B cell (primary cell): ENCODE measurements at regions of chr1 and their contacts with region 1.

Region 1: DNA sequence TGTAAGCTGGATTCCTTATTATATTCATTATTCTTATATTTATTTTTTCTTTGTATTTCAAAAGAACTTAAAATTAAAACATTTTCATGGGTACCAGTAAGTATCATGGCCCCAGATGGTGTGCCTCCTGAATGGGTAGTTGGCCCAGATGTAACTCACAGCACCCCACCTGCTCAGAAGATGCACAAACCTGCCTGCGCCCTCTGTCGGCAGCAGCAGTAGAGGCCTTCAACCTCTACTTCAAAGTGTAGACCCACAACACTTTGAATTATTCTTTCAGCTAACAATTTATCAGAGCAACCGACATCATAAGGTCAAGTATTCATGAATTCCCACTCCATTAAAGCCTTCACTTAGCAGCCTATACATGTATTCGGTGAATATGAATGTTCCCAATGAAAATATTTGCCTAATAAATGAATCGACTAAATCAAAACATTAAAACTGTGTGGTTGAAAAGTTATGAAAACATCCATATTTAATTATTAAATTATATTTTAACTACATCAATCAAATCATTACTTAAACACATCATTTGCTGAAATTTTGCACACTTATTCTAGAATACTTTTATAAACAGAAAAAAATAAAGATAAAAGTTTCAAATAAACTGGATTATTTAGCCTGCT is 25.4 kb downstream of the PIGM start:
- DNase-seq: peak; percentile 83
- ATAC-seq: peak; percentile 84
- H3K4me3 ChIP-seq: no peak overlapping the region
- H3K4me3 Mint-ChIP-seq: no peak overlapping the region
- H3K27ac ChIP-seq: no peak overlapping the region
- H3K27ac Mint-ChIP-seq: no peak overlapping the region
- H3K4me1 ChIP-seq: no peaks in the 10 kb centered on the region
- H3K4me1 Mint-ChIP-seq: no peaks in the 10 kb centered on the region
- H3K27me3 ChIP-seq: peaks cover 0 to 7% (median 0%) of the 10 kb centered on the region in 4 experiments
- H3K27me3 Mint-ChIP-seq: peaks cover 15% of the 10 kb centered on the region
- CTCF ChIP-seq: peak; percentile 91

Region 2: GRCh38 chr1:159214149-159214760 is 792.2 kb before region 1 on chr1:
- CTCF ChIA-PET with region 1: interaction called, 15 read pairs
- POLR2A ChIA-PET with region 1: no interaction called
- intact Hi-C with region 1: no loop called
- DNase-seq: peak; percentile 64
- ATAC-seq: peak; percentile 73
- H3K4me3 ChIP-seq: no peak overlapping the region
- H3K4me3 Mint-ChIP-seq: no peak overlapping the region
- H3K27ac ChIP-seq: no peak overlapping the region
- H3K27ac Mint-ChIP-seq: no peak overlapping the region
- H3K4me1 ChIP-seq: peaks cover 0 to 3% of the 10 kb centered on the region in 2 donors
- H3K4me1 Mint-ChIP-seq: peaks cover 2% of the 10 kb centered on the region
- H3K27me3 ChIP-seq: peaks cover 0 to 25% (median 7%) of the 10 kb centered on the region in 4 experiments
- H3K27me3 Mint-ChIP-seq: peaks cover 54% of the 10 kb centered on the region
- CTCF ChIP-seq: peak; percentile 98

Region 3: GRCh38 chr1:159737238-159737916 is 269.0 kb before region 1 on chr1:
- CTCF ChIA-PET with region 1: no interaction called
- POLR2A ChIA-PET with region 1: no interaction called
- intact Hi-C with region 1: no loop called
- DNase-seq: no peak
- ATAC-seq: no peak
- H3K4me3 ChIP-seq: no peak overlapping the region
- H3K4me3 Mint-ChIP-seq: no peak overlapping the region
- H3K27ac ChIP-seq: no peak overlapping the region
- H3K27ac Mint-ChIP-seq: no peak overlapping the region
- H3K4me1 ChIP-seq: no peaks in the 10 kb centered on the region
- H3K4me1 Mint-ChIP-seq: no peaks in the 10 kb centered on the region
- H3K27me3 ChIP-seq: peaks cover 0 to 2% (median 0%) of the 10 kb centered on the region in 4 experiments
- H3K27me3 Mint-ChIP-seq: peaks cover 22% of the 10 kb centered on the region
- CTCF ChIP-seq: no peak

Region 4: DNA sequence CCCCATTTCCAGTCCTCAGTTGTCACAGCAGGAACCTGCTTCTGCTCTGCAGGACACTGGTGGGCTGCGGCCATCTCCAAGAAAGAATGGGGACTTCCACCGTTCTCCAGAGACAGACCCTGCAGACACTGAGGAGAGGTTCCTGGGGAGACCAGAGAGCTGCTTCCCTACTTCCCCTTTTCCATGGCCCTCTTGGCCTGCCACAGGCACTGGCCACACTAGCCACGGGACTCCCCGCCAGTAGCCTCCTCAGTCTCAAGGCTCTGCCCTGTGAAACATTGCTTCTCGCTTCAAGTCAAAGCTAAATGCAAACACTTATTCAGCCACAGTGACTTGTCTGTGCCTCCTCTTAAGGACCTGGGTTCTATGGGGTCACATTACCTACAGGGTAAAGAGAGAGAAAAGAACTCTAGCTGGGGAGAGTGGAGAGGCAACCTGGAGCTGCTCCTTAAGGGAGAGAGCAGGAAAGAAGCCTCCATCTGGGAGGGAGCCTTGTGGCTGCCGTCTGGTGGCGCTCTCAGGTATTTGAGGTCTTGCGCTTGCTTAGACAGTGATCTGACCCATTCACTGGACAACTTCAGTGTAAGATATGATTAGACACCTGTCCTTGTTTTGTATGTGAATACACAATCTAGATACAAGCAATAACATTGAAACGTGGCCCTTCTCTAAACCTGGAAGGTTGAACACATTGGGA is 185.1 kb before region 1 on chr1:
- CTCF ChIA-PET with region 1: interaction called, 26 read pairs
- POLR2A ChIA-PET with region 1: no interaction called
- intact Hi-C with region 1: no loop called
- DNase-seq: peak; percentile 52
- ATAC-seq: no peak
- H3K4me3 ChIP-seq: no peak overlapping the region
- H3K4me3 Mint-ChIP-seq: no peak overlapping the region
- H3K27ac ChIP-seq: no peak overlapping the region
- H3K27ac Mint-ChIP-seq: no peak overlapping the region
- H3K4me1 ChIP-seq: peaks cover under 1 to 3% of the 10 kb centered on the region in 2 donors
- H3K4me1 Mint-ChIP-seq: peaks cover 4% of the 10 kb centered on the region
- H3K27me3 ChIP-seq: peaks cover 0 to 6% (median 0%) of the 10 kb centered on the region in 4 experiments
- H3K27me3 Mint-ChIP-seq: peaks cover 52% of the 10 kb centered on the region
- CTCF ChIP-seq: peak; percentile 69

Region 5: DNA sequence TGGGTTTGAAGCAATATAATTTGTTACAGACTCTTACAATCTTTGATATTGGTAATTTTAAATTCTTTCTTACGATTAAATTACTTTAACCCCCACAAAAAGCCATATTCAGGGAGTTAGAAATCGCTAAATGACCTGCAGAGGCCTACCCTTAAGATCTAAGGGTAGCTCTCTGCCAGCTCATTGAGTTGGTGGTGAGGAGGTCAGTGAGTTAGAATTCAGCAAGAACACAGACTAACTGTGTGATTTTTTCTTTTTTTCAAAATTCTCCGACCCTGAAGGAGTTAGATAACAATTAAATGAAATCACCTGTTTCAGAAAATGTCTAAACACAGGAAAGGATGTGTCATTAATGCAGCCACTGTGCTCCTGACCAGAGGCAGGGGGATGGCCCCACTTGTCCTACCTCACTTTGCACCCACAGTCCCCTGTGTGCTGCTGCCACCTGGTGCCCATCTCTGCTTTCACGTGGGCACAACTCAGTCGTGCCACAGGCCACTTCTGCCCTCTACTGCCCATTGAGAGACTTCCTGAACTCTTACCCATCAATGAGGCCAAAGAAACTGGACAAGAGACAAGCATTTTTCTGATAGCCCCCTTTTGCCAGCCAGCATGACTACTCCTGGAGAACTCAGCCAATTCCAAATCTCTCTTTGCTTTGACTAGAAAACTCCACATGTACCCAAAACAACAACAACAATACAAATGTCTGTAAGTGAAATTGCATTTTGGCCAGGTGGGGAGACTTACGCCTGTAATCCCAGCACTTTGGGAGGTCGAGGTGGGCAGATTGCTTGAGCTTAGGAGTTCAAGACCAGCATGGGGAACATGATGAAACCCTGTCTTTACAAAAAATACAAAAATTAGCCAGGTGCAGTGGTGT is 114.9 kb before region 1 on chr1:
- CTCF ChIA-PET with region 1: interaction called, 100 read pairs
- POLR2A ChIA-PET with region 1: no interaction called
- intact Hi-C with region 1: loop called (anchors 1 kb)
- DNase-seq: peak; percentile 81
- ATAC-seq: peak; percentile 86
- H3K4me3 ChIP-seq: no peak overlapping the region
- H3K4me3 Mint-ChIP-seq: no peak overlapping the region
- H3K27ac ChIP-seq: no peak overlapping the region
- H3K27ac Mint-ChIP-seq: peak overlapping the region; percentile 70
- H3K4me1 ChIP-seq: peaks cover 18 to 19% of the 10 kb centered on the region in 2 donors
- H3K4me1 Mint-ChIP-seq: peaks cover 26% of the 10 kb centered on the region
- H3K27me3 ChIP-seq: peaks cover 0 to 6% (median 0%) of the 10 kb centered on the region in 4 experiments
- H3K27me3 Mint-ChIP-seq: peaks cover 6% of the 10 kb centered on the region
- CTCF ChIP-seq: peak; percentile 78

Region 6: GRCh38 chr1:159945483-159946241 is 60.8 kb before region 1 on chr1 and contains the start of gene IGSF9:
- CTCF ChIA-PET with region 1: interaction called, 177 read pairs
- POLR2A ChIA-PET with region 1: no interaction called
- intact Hi-C with region 1: no loop called
- DNase-seq: peak; percentile 81
- ATAC-seq: peak; percentile 94
- H3K4me3 ChIP-seq: peak within 1 kb of the TSS in 4 of 5 experiments; percentile 8 to 46 (median 42)
- H3K4me3 Mint-ChIP-seq: peak within 1 kb of the TSS; percentile 60
- H3K27ac ChIP-seq: no peak within 1 kb of the TSS
- H3K27ac Mint-ChIP-seq: no peak within 1 kb of the TSS
- H3K4me1 ChIP-seq: peaks cover 15 to 18% of the 10 kb centered on the region in 2 donors
- H3K4me1 Mint-ChIP-seq: peaks cover 15% of the 10 kb centered on the region
- H3K27me3 ChIP-seq: peaks cover 0 to 34% (median 18%) of the 10 kb centered on the region in 4 experiments
- H3K27me3 Mint-ChIP-seq: peaks cover 40% of the 10 kb centered on the region
- CTCF ChIP-seq: peak; percentile 45
- total RNA-seq, gene IGSF9: 0.15 and 0.37 TPM in 2 replicates

Region 7: GRCh38 chr1:160018900-160019299 is 12.5 kb after region 1 on chr1:
- CTCF ChIA-PET with region 1: interaction called, 66 read pairs
- POLR2A ChIA-PET with region 1: no interaction called
- intact Hi-C with region 1: no loop called
- DNase-seq: no peak
- ATAC-seq: no peak
- H3K4me3 ChIP-seq: no peak overlapping the region
- H3K4me3 Mint-ChIP-seq: no peak overlapping the region
- H3K27ac ChIP-seq: no peak overlapping the region
- H3K27ac Mint-ChIP-seq: no peak overlapping the region
- H3K4me1 ChIP-seq: no peaks in the 10 kb centered on the region
- H3K4me1 Mint-ChIP-seq: no peaks in the 10 kb centered on the region
- H3K27me3 ChIP-seq: no peaks in the 10 kb centered on the region
- H3K27me3 Mint-ChIP-seq: peaks cover 18% of the 10 kb centered on the region
- CTCF ChIP-seq: no peak

Region 8: DNA sequence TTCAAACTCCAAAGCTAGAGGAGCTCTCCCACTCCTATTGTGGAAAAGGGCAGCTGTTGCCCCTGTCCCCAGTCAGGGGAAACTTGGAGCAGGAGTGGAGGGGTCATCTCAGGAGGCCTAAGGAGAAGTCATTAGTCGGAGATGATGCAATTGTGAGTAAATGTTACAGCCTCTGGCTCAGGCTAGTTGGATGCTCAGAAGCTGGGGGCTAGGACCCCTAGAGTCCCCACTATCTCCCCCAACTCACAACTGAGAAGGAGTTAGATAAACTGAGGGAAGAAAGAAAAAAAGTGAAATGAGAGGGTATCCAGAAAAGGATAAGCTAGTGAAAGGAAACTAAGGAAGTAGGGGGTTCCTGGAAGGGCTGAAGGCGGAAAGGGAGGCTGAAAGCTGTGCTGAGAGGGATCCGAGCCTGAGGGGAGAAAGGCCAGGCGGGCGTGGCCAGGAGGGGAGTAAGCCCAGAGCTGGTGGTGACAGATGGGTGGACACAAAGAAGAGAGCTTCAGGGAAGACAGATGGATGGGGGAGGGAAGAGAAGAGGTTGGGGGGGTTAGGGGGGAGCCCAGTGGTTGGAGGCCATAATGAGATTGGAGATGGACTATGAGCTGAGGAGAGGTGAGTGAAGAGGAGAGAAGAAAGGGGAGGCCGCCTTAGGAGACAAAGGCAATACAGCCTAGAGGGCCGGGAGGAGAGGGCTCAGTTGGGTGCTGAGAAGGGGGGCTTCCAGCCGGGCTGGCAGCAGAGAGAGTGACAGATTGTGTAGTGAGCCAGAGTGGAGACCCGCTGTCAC is 355.9 kb after region 1 on chr1:
- CTCF ChIA-PET with region 1: no interaction called
- POLR2A ChIA-PET with region 1: no interaction called
- intact Hi-C with region 1: no loop called
- DNase-seq: no peak
- ATAC-seq: no peak
- H3K4me3 ChIP-seq: no peak overlapping the region
- H3K4me3 Mint-ChIP-seq: no peak overlapping the region
- H3K27ac ChIP-seq: no peak overlapping the region
- H3K27ac Mint-ChIP-seq: peak overlapping the region; percentile 68
- H3K4me1 ChIP-seq: no peaks in the 10 kb centered on the region
- H3K4me1 Mint-ChIP-seq: no peaks in the 10 kb centered on the region
- H3K27me3 ChIP-seq: no peaks in the 10 kb centered on the region
- H3K27me3 Mint-ChIP-seq: no peaks in the 10 kb centered on the region
- CTCF ChIP-seq: no peak